ENCODE measurements at regions of chr1 and their contacts with region 1.

Region 1: DNA sequence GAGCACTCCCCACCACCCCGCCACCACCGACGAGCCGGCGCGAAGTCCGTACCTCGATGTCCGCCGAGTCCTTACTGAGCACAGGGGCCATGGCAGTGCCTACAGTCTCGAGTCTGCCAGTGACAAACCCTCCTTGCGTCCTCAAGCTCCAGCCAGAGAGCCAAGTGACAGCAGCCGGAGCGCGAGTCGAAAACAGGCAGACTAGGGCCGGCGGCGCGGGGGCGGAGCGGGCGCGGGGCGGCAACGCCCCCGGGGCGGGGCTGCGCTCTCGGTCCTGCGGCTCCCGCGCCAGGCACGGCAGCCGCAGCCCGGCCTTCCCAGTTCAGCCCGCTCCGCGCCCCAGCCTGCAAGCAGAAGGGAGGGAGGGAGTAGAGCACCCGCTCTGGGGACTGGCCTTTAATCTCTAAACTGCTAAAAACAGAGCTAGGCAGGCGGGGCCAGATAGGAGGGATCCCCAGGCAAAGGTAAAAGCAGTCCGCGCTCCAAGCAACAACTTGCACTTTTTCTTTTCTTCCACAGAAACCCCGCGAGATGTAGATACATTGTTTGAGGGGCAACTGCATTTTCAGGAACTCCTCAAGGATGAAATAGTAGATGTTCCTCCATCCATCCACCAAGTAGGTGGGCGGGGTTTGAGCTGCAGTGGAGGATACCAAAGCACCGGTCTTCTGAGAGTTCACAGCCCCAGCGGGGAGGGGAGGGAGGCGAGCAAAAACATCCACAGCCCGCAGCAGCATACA is at the start of gene DPYD:
- DNase-seq: peak; percentile 84 to 89 (median 85)
- H3K4me3 ChIP-seq: peak within 1 kb of the TSS; percentile 87 to 96
- H3K4me3 Mint-ChIP-seq: peak within 1 kb of the TSS; percentile 96 to 98 (median 97)
- H3K27ac ChIP-seq: peak within 1 kb of the TSS; percentile 86
- H3K27ac Mint-ChIP-seq: peak within 1 kb of the TSS; percentile 93 to 97 (median 96)
- H3K4me1 ChIP-seq: peaks cover 41% of the 10 kb centered on the region
- H3K4me1 Mint-ChIP-seq: peaks cover 36 to 56% (median 41%) of the 10 kb centered on the region in 4 donors
- H3K27me3 ChIP-seq: no peaks in the 10 kb centered on the region
- H3K27me3 Mint-ChIP-seq: no peaks in the 10 kb centered on the region
- total RNA-seq, gene DPYD: 51.1 to 52.7 TPM

Region 2: DNA sequence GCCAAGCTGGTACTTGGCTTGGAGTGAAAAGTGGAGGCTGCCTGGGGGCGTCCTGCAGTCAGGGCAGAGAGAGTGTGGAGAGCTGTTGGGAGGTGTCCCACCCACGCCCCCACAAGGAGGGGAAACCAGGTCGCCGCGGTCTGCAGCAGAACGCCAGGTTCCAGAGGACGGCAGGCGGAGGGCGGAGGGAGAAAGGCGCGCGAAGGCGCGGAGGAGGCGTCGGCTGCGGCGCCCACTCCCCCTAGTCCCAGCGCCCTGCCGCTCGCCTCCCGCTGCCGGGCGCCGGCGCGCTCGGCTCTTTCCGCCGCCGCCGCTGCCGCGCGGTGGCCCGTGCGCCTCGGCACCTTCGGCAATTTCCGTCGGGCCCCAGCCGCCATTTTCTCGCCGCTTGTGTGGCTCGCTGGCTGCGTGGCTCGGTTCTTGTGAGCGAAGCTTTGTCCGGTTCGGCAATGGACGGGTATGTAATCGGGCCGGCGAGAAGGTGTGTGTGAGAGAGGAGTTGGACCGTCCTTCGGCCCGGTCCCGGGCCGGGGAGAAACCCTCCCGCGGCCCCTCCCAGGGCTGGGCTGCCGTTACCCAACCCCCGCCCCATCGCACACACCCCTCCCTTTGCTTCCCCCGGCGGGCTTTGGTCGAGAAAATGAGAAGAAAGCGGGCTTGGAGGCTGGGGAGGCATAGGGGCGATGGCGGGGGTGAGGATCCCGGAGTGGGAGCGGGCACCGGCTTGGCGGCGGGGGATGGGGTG is 1199.4 kb before region 1 on chr1 and contains the start of gene PTBP2:
- CTCF ChIA-PET with region 1: no interaction called
- POLR2A ChIA-PET with region 1: no interaction called
- intact Hi-C with region 1: loop called (anchors 5 kb)
- DNase-seq: peak; percentile 82 to 89 (median 86)
- H3K4me3 ChIP-seq: peak within 1 kb of the TSS; percentile 83 to 88
- H3K4me3 Mint-ChIP-seq: peak within 1 kb of the TSS; percentile 93 to 99 (median 96)
- H3K27ac ChIP-seq: peak within 1 kb of the TSS; percentile 89
- H3K27ac Mint-ChIP-seq: peak within 1 kb of the TSS; percentile 89 to 97 (median 96)
- H3K4me1 ChIP-seq: peaks cover 25% of the 10 kb centered on the region
- H3K4me1 Mint-ChIP-seq: peaks cover 18 to 37% (median 26%) of the 10 kb centered on the region in 4 donors
- H3K27me3 ChIP-seq: no peaks in the 10 kb centered on the region
- H3K27me3 Mint-ChIP-seq: no peaks in the 10 kb centered on the region
- total RNA-seq, gene PTBP2: 20.6 to 21.0 TPM

Region 3: DNA sequence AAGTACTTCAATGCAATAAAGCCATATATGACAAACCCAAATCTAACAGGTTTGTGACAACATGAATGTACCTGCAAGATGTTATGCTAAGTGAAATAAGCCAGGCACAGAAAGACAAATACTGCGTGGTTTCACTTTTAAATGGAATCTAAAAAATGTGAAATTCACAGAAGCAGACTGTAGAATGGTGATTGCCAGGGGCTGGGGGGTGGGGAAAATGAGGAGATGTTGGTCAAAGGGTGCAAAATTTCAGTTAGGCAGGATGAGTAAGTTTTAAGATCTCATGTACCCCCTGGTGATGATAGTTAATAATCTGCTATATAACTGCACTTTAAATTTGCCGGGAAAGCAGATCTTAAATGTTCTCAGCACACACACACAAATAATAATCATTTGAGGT is 1038.9 kb before region 1 on chr1:
- CTCF ChIA-PET with region 1: no interaction called
- POLR2A ChIA-PET with region 1: no interaction called
- intact Hi-C with region 1: no loop called
- DNase-seq: no peak
- H3K4me3 ChIP-seq: no peak overlapping the region
- H3K4me3 Mint-ChIP-seq: no peak overlapping the region
- H3K27ac ChIP-seq: no peak overlapping the region
- H3K27ac Mint-ChIP-seq: no peak overlapping the region
- H3K4me1 ChIP-seq: no peaks in the 10 kb centered on the region
- H3K4me1 Mint-ChIP-seq: no peaks in the 10 kb centered on the region
- H3K27me3 ChIP-seq: no peaks in the 10 kb centered on the region
- H3K27me3 Mint-ChIP-seq: no peaks in the 10 kb centered on the region

Region 4: DNA sequence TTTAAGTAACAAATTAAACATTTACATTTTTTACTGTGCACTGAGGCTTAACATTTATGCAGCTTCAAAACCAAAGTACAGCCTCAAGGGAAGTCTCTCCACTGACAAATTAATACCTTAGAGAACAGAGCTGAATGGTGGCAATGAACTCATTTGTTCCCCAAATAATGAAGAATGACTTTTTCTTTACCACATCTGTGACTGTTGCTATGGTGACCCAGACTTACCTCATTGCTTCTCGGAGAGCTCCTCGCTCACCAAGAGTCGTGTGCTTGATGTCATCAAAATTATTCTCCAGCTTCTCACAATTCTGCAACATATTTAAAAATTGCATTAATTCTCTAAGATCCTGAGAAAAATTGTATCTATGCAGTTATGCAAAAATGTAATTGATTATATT is 93.1 kb before region 1 on chr1:
- CTCF ChIA-PET with region 1: no interaction called
- POLR2A ChIA-PET with region 1: no interaction called
- intact Hi-C with region 1: no loop called
- DNase-seq: no peak
- H3K4me3 ChIP-seq: no peak overlapping the region
- H3K4me3 Mint-ChIP-seq: no peak overlapping the region
- H3K27ac ChIP-seq: no peak overlapping the region
- H3K27ac Mint-ChIP-seq: no peak overlapping the region
- H3K4me1 ChIP-seq: no peaks in the 10 kb centered on the region
- H3K4me1 Mint-ChIP-seq: peaks cover 0 to 7% (median 5%) of the 10 kb centered on the region in 4 donors
- H3K27me3 ChIP-seq: no peaks in the 10 kb centered on the region
- H3K27me3 Mint-ChIP-seq: no peaks in the 10 kb centered on the region

Region 5: GRCh38 chr1:97849345-97850340 is 71.4 kb before region 1 on chr1:
- CTCF ChIA-PET with region 1: no interaction called
- POLR2A ChIA-PET with region 1: no interaction called
- intact Hi-C with region 1: loop called (anchors 2 kb)
- DNase-seq: no peak
- H3K4me3 ChIP-seq: no peak overlapping the region
- H3K4me3 Mint-ChIP-seq: no peak overlapping the region
- H3K27ac ChIP-seq: no peak overlapping the region
- H3K27ac Mint-ChIP-seq: no peak overlapping the region
- H3K4me1 ChIP-seq: no peaks in the 10 kb centered on the region
- H3K4me1 Mint-ChIP-seq: peaks cover 10 to 38% (median 15%) of the 10 kb centered on the region in 4 donors
- H3K27me3 ChIP-seq: no peaks in the 10 kb centered on the region
- H3K27me3 Mint-ChIP-seq: no peaks in the 10 kb centered on the region

Region 6: DNA sequence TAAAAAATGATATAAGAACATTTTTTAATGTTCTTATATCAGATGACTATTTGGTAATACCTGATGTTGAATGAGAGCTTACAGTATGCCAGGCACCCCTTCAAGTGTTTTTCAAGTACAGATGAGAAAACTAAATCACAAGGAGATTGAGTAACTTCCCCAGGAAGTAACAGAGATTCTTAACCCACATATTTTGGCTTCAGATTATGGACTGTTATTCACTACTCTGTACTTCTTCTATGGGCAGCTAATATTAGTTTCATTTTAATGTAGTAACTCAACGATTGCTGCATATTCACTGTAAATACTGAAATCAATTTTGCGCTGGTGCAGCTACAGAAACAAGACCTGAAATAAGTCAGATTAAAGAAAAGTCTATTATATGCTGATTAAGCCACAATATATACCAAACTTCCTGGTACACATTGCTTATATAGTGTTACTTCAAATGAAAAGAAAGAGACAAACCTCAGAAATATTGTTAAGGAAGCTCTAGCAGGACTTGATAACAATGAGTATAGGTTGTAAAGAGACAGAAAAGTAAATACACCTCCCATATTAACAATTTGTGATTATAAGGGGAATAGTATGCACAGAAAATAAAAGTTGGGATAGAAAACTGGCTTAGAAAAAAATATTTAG is 19.9 kb before region 1 on chr1:
- CTCF ChIA-PET with region 1: no interaction called
- POLR2A ChIA-PET with region 1: interaction called, 22 read pairs
- intact Hi-C with region 1: loop called (anchors 1 kb)
- DNase-seq: no peak
- H3K4me3 ChIP-seq: no peak overlapping the region
- H3K4me3 Mint-ChIP-seq: peak overlapping the region in 6 of 8 donors; percentile 44 to 67 (median 60)
- H3K27ac ChIP-seq: no peak overlapping the region
- H3K27ac Mint-ChIP-seq: peak overlapping the region in 6 of 7 donors; percentile 0 to 85 (median 42)
- H3K4me1 ChIP-seq: peaks cover 19% of the 10 kb centered on the region
- H3K4me1 Mint-ChIP-seq: peaks cover 36 to 65% (median 48%) of the 10 kb centered on the region in 4 donors
- H3K27me3 ChIP-seq: no peaks in the 10 kb centered on the region
- H3K27me3 Mint-ChIP-seq: no peaks in the 10 kb centered on the region

Region 7: DNA sequence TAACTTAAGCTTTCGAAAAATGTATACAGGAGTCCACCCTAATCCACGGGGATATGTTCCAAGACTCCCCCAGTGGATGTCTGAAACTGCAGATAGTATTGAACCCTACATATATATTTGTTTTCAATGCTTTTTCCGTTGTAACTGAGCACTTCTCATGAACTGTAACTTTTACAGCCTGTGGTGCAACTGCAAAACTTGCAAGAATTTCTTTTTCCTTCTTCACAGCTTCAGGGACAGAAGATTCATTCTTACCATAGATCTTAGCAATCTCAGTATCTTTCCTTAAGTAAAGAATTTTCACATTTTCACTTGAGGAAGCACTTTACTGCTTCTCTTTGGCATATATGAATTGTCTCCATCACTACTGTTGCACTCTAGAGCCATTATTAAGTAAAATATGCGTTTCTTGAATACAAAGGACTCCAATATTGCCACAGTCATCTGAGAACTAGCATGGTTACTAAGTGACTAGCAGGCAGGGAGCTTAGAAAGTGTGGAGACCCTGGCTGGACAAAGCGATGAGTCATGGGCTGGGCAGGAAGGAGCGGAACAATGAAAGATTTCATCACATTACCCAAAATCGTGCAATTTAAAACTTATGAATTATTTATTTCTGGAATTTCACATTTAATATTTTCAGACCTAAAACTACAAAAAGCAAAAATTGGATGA is 14.3 kb before region 1 on chr1:
- CTCF ChIA-PET with region 1: interaction called, 7 read pairs
- POLR2A ChIA-PET with region 1: interaction called, 22 read pairs
- intact Hi-C with region 1: loop called (anchors 1 kb)
- DNase-seq: no peak
- H3K4me3 ChIP-seq: no peak overlapping the region
- H3K4me3 Mint-ChIP-seq: no peak overlapping the region
- H3K27ac ChIP-seq: no peak overlapping the region
- H3K27ac Mint-ChIP-seq: no peak overlapping the region
- H3K4me1 ChIP-seq: peaks cover 15% of the 10 kb centered on the region
- H3K4me1 Mint-ChIP-seq: peaks cover 24 to 40% (median 32%) of the 10 kb centered on the region in 4 donors
- H3K27me3 ChIP-seq: no peaks in the 10 kb centered on the region
- H3K27me3 Mint-ChIP-seq: no peaks in the 10 kb centered on the region

Region 8: DNA sequence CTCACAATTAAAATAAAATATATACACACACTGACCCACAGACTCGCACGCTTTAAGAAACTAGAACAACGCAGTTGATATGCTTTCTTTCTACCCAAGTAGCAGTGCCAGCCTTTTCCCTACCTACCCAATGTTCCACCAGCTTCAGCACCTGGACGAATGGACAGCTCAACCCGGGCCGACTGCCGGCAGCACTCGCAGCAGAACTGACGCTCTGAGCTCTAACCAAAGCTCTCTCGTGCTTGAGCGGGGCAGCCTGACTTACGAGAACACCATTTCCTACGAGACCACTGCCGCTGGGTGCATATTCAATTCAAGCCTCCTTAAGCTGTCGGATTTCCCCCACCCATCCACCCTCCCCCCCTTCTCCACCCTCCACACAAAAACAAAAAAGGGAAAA is 127.2 kb after region 1 on chr1:
- CTCF ChIA-PET with region 1: interaction called, 7 read pairs
- POLR2A ChIA-PET with region 1: interaction called, 5 read pairs
- intact Hi-C with region 1: loop called (anchors 1 kb)
- DNase-seq: peak; percentile 64 to 74 (median 71)
- H3K4me3 ChIP-seq: no peak overlapping the region
- H3K4me3 Mint-ChIP-seq: peak overlapping the region in 7 of 8 donors; percentile 13 to 67 (median 29)
- H3K27ac ChIP-seq: no peak overlapping the region
- H3K27ac Mint-ChIP-seq: peak overlapping the region in 2 of 7 donors; percentile 24 to 64
- H3K4me1 ChIP-seq: peaks cover 38% of the 10 kb centered on the region
- H3K4me1 Mint-ChIP-seq: peaks cover 27 to 48% (median 38%) of the 10 kb centered on the region in 4 donors
- H3K27me3 ChIP-seq: peaks cover 51% of the 10 kb centered on the region
- H3K27me3 Mint-ChIP-seq: peaks cover 60 to 69% of the 10 kb centered on the region in 2 donors